ENCODE measurements at regions of chr11 and their contacts with region 1.

Region 1: GRCh38 chr11:130916238-130916855 is at the start of gene SNX19:
- DNase-seq: peak; percentile 94
- ATAC-seq: peak; percentile 100
- H3K4me3 Mint-ChIP-seq: peak within 1 kb of the TSS; percentile 78
- H3K27ac Mint-ChIP-seq: peak within 1 kb of the TSS; percentile 84
- H3K4me1 Mint-ChIP-seq: peaks cover 32% of the 10 kb centered on the region
- H3K27me3 Mint-ChIP-seq: peaks cover 4% of the 10 kb centered on the region
- total RNA-seq, gene SNX19: 22.7 to 29.5 TPM

Region 2: GRCh38 chr11:129895126-129896041 is 1021.0 kb before region 1 on chr11 and contains the start of gene NFRKB:
- CTCF ChIA-PET with region 1: no interaction called
- POLR2A ChIA-PET with region 1: no interaction called
- intact Hi-C with region 1: loop called in 1 of 2 experiments (anchors 1 kb)
- DNase-seq: peak; percentile 94
- ATAC-seq: peak; percentile 99
- H3K4me3 Mint-ChIP-seq: peak within 1 kb of the TSS; percentile 84
- H3K27ac Mint-ChIP-seq: peak within 1 kb of the TSS; percentile 71
- H3K4me1 Mint-ChIP-seq: peaks cover 41% of the 10 kb centered on the region
- H3K27me3 Mint-ChIP-seq: no peaks in the 10 kb centered on the region
- total RNA-seq, gene NFRKB: 27.3 to 31.0 TPM

Region 3: DNA sequence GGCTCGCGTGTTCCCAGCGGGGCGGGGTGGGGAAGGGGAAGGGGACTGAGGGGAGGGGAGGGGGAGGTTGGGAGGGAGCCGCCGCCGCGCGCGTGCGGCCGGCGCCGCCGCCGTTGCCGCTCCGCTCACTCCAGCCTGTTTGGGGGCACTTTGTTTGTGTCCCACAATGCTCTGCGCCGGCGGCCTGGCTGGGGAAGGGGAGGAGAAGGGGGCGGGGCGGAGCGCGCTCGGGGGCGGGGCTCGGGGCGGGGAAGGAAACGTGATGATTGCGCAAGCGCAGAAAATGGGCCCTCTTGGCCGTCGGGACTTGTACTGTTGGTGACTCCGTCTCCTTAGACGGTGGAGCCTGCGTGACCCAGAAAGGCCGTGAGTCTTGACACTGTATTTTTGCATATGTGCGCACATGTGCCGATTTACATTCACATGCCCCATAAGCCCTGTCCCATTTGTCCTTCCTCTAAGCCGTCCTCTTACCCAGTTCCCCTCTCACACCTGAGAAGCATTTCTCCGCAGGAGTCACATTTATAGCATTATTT is 601.5 kb before region 1 on chr11 and contains the start of gene ZBTB44:
- CTCF ChIA-PET with region 1: no interaction called
- POLR2A ChIA-PET with region 1: no interaction called
- intact Hi-C with region 1: loop called in 1 of 2 experiments (anchors 2 kb)
- DNase-seq: peak; percentile 96
- ATAC-seq: peak; percentile 78
- H3K4me3 Mint-ChIP-seq: peak within 1 kb of the TSS; percentile 83
- H3K27ac Mint-ChIP-seq: peak within 1 kb of the TSS; percentile 95
- H3K4me1 Mint-ChIP-seq: peaks cover 36% of the 10 kb centered on the region
- H3K27me3 Mint-ChIP-seq: no peaks in the 10 kb centered on the region
- total RNA-seq, gene ZBTB44: 38.2 to 49.4 TPM

Region 4: GRCh38 chr11:130894322-130895025 is 21.9 kb before region 1 on chr11:
- CTCF ChIA-PET with region 1: interaction called, 17 read pairs
- POLR2A ChIA-PET with region 1: no interaction called
- intact Hi-C with region 1: no loop called
- DNase-seq: peak; percentile 76
- ATAC-seq: peak; percentile 92
- H3K4me3 Mint-ChIP-seq: no peak overlapping the region
- H3K27ac Mint-ChIP-seq: peak overlapping the region; percentile 6
- H3K4me1 Mint-ChIP-seq: peaks cover 12% of the 10 kb centered on the region
- H3K27me3 Mint-ChIP-seq: no peaks in the 10 kb centered on the region

Region 5: GRCh38 chr11:130904380-130904779 is 12.0 kb before region 1 on chr11:
- CTCF ChIA-PET with region 1: interaction called, 17 read pairs
- POLR2A ChIA-PET with region 1: no interaction called
- intact Hi-C with region 1: no loop called
- DNase-seq: no peak
- ATAC-seq: no peak
- H3K4me3 Mint-ChIP-seq: no peak overlapping the region
- H3K27ac Mint-ChIP-seq: no peak overlapping the region
- H3K4me1 Mint-ChIP-seq: peaks cover 14% of the 10 kb centered on the region
- H3K27me3 Mint-ChIP-seq: no peaks in the 10 kb centered on the region

Region 6: DNA sequence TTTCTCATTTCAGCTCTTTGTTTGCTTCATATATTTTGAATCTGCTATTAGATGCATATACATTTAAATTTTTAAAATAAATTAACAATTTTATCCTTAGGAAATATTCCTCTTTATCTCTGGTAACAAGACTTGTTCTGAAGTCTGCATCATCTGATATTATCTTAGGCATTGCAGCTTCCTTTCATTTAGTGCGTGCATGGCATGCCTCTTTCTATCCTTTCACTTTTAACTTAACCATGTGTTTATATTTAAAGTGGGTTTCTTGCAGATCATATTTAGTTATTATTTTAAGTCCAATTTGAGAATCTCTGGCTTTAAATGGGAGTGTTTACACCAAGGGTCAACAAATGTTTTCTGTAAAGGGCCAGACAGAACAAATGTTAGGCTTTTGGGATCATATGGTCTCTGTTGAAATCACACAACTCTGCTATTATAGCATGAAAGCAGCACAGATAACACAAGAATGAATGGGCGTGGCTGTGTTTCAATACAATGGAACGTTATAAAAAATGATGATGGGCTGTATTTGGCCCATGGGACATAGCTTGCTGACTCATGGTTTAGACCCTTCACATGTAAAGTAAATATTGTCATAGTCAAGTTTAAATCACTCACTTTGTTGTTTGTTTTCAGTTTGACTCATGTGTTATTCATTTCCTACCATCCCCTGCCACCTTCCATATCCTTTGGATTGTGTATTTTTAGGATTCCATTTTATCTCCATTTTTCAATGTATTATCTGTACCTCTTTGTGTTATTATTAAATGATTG is 83.8 kb after region 1 on chr11:
- CTCF ChIA-PET with region 1: no interaction called
- POLR2A ChIA-PET with region 1: no interaction called
- intact Hi-C with region 1: no loop called
- DNase-seq: no peak
- ATAC-seq: no peak
- H3K4me3 Mint-ChIP-seq: no peak overlapping the region
- H3K27ac Mint-ChIP-seq: no peak overlapping the region
- H3K4me1 Mint-ChIP-seq: no peaks in the 10 kb centered on the region
- H3K27me3 Mint-ChIP-seq: peaks cover 4% of the 10 kb centered on the region

Measured in activated CD4-positive, alpha-beta T cell treated with anti-CD3 and anti-CD28 coated beads for 36 hours (primary cell).